B cell (primary cell): ENCODE measurements at regions of chr3 and their contacts with region 1.

Region 1: DNA sequence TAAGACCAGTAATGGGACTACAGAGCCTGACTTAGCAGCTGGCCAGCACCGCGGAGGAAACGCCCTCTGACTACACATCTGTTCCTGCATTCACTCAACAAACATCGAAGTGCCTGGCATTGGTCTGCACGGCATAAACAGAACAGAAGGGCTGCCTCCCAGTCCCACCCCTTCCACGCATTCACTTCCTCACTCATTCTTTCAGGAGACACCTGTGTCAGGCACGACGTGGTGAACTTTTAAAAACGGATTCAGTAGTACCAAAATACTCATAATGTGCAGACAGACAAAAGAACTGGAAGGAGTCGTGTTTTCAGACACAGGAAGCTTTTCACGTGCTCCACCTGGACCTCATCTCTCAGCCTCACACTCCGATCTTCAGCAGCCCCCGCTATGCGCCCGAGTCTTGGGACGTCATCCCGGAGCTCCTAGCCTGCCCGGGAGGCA is 123.3 kb downstream of the XXYLT1 start:
- DNase-seq: peak; percentile 77
- ATAC-seq: peak; percentile 73
- H3K4me3 ChIP-seq: peak overlapping the region; percentile 38 to 56 (median 44)
- H3K4me3 Mint-ChIP-seq: peak overlapping the region; percentile 90
- H3K27ac ChIP-seq: peak overlapping the region; percentile 45
- H3K27ac Mint-ChIP-seq: peak overlapping the region; percentile 89
- H3K4me1 ChIP-seq: peaks cover 51 to 77% of the 10 kb centered on the region in 2 donors
- H3K4me1 Mint-ChIP-seq: peaks cover 71% of the 10 kb centered on the region
- H3K27me3 ChIP-seq: no peaks in the 10 kb centered on the region
- H3K27me3 Mint-ChIP-seq: no peaks in the 10 kb centered on the region
- CTCF ChIP-seq: no peak

Region 2: DNA sequence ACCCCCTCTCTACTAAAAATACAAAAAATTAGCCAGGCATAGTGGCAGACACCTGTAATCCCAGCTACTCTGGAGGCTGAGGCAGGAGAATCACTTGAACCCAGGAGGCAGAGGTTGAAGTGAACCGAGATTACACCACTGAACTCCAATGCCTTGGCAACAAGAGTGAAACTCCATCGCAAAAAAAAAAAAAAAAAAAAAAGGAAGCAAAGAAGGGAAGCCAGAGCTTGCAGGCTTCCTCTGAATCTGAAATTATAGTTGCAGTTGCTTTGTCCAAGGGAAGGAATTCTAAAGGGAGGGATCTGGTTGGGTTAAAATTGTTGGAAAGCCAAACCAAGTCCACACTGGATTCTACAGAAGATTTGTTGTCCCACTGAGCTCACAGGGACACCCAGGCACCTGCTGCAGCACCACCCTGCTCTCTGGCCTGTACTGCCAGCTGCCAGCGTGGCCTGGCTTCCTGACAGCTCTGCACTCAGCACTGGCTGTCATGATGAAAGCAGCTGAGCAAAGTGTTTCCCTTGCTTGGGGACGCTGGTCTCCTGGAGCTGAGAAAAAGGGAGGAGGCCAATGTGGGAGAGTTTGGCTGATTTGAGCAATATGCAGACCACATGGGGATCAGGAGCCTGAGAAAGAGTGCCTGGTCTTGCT is 1100.6 kb before region 1 on chr3:
- CTCF ChIA-PET with region 1: no interaction called
- POLR2A ChIA-PET with region 1: no interaction called
- intact Hi-C with region 1: no loop called
- DNase-seq: peak; percentile 51
- ATAC-seq: peak; percentile 72
- H3K4me3 ChIP-seq: no peak overlapping the region
- H3K4me3 Mint-ChIP-seq: no peak overlapping the region
- H3K27ac ChIP-seq: peak overlapping the region in 1 of 2 donors; percentile 8
- H3K27ac Mint-ChIP-seq: peak overlapping the region; percentile 69
- H3K4me1 ChIP-seq: peaks cover 20 to 30% of the 10 kb centered on the region in 2 donors
- H3K4me1 Mint-ChIP-seq: peaks cover 29% of the 10 kb centered on the region
- H3K27me3 ChIP-seq: no peaks in the 10 kb centered on the region
- H3K27me3 Mint-ChIP-seq: no peaks in the 10 kb centered on the region
- CTCF ChIP-seq: no peak

Region 3: DNA sequence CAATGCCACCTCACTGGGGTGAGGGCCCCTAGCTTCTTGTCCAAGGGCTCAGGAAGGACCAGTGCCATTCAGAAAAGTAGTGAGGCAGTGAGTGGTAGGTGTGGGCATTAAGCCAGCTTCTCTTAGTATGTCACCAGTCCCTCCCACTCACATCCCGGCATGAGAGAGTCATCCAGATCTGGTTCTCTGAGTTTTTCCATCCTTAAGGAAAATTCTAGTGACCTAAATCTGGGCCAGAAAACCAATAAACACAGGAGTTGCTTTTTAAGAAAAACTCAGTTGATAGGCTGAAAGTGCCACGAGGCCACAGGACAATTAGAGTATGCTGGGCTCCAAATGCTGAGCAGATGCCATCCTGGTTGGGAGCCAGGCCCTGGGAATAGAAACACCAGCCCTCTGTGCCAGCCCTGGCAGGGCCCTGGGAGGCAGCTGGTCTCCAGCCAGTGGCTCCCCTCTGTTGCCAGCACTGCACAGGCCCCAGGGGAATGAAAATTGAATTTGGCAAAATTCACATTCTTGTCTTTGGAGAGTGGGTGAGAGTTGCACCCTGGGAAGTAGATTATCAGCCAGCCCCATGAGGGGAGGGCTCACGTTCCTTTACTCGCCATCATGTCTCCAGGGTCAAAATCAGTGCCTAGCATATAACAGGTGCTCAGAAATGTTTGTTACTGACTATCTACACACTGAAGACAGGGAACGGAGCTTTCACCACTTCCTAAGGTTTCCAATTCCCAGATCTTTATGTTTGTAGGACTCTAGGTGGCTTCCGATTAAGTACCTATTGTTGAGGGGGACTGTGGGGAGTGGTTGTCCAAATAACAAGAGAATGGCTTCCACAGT is 409.2 kb before region 1 on chr3:
- CTCF ChIA-PET with region 1: no interaction called
- POLR2A ChIA-PET with region 1: no interaction called
- intact Hi-C with region 1: loop called (anchors 5 kb)
- DNase-seq: no peak
- ATAC-seq: no peak
- H3K4me3 ChIP-seq: no peak overlapping the region
- H3K4me3 Mint-ChIP-seq: no peak overlapping the region
- H3K27ac ChIP-seq: no peak overlapping the region
- H3K27ac Mint-ChIP-seq: peak overlapping the region; percentile 27
- H3K4me1 ChIP-seq: peaks cover 25 to 35% of the 10 kb centered on the region in 2 donors
- H3K4me1 Mint-ChIP-seq: peaks cover 28% of the 10 kb centered on the region
- H3K27me3 ChIP-seq: no peaks in the 10 kb centered on the region
- H3K27me3 Mint-ChIP-seq: no peaks in the 10 kb centered on the region
- CTCF ChIP-seq: no peak

Region 4: DNA sequence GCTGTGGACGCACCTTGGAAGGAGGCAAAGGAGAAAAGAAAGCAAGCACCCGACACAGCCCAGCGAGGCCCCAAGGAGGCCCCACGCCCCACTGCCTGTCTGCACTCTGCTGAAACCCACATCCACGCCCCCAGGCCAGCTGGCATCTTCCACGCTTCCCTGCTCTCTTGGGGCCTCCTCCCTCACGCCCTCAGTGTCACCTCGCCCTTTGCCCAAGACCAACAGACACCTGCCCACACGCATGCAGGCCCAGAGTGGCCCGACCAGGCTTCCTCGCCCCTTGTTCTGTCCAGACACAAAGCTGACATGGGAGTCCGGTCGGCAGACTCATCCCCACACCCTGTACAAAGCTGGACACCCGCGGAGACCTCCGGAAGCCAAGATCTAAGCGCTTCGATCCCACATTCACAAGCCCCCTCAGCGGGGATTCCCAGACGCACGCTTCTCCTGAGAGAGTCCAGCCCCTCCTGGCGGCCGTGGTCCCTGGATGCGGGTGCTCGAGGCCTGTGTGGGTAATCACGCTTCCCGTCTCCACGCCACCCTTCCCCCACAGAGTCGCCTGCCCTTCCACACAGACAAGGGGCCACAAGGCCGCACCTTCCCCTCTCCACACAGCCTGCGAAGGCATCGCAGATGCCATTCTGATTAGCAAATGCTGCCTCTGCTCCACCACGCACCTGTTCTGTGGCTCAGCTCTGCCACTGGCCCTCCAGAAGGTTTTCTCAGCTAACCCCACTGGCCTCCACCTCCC is 53.3 kb before region 1 on chr3:
- CTCF ChIA-PET with region 1: no interaction called
- POLR2A ChIA-PET with region 1: no interaction called
- intact Hi-C with region 1: loop called (anchors 2 kb)
- DNase-seq: peak; percentile 87
- ATAC-seq: peak; percentile 85
- H3K4me3 ChIP-seq: peak overlapping the region in 4 of 5 experiments; percentile 36 to 63 (median 52)
- H3K4me3 Mint-ChIP-seq: peak overlapping the region; percentile 81
- H3K27ac ChIP-seq: peak overlapping the region; percentile 89 to 95
- H3K27ac Mint-ChIP-seq: peak overlapping the region; percentile 93
- H3K4me1 ChIP-seq: peaks cover 44 to 49% of the 10 kb centered on the region in 2 donors
- H3K4me1 Mint-ChIP-seq: peaks cover 54% of the 10 kb centered on the region
- H3K27me3 ChIP-seq: no peaks in the 10 kb centered on the region
- H3K27me3 Mint-ChIP-seq: no peaks in the 10 kb centered on the region
- CTCF ChIP-seq: no peak

Region 5: GRCh38 chr3:195133462-195133861 is 14.2 kb before region 1 on chr3:
- CTCF ChIA-PET with region 1: interaction called, 9 read pairs
- POLR2A ChIA-PET with region 1: interaction called, 12 read pairs
- intact Hi-C with region 1: loop called (anchors 1 kb)
- DNase-seq: peak; percentile 66
- ATAC-seq: no peak
- H3K4me3 ChIP-seq: no peak overlapping the region
- H3K4me3 Mint-ChIP-seq: peak overlapping the region; percentile 37
- H3K27ac ChIP-seq: no peak overlapping the region
- H3K27ac Mint-ChIP-seq: peak overlapping the region; percentile 60
- H3K4me1 ChIP-seq: peaks cover 16 to 22% of the 10 kb centered on the region in 2 donors
- H3K4me1 Mint-ChIP-seq: peaks cover 37% of the 10 kb centered on the region
- H3K27me3 ChIP-seq: no peaks in the 10 kb centered on the region
- H3K27me3 Mint-ChIP-seq: no peaks in the 10 kb centered on the region
- CTCF ChIP-seq: no peak

Region 6: GRCh38 chr3:195162033-195162669 is 14.5 kb after region 1 on chr3:
- CTCF ChIA-PET with region 1: interaction called, 12 read pairs
- POLR2A ChIA-PET with region 1: interaction called, 8 read pairs
- intact Hi-C with region 1: loop called (anchors 1 kb)
- DNase-seq: no peak
- ATAC-seq: peak; percentile 14
- H3K4me3 ChIP-seq: no peak overlapping the region
- H3K4me3 Mint-ChIP-seq: peak overlapping the region; percentile 61
- H3K27ac ChIP-seq: peak overlapping the region; percentile 14 to 21
- H3K27ac Mint-ChIP-seq: peak overlapping the region; percentile 86
- H3K4me1 ChIP-seq: peaks cover 43 to 64% of the 10 kb centered on the region in 2 donors
- H3K4me1 Mint-ChIP-seq: peaks cover 61% of the 10 kb centered on the region
- H3K27me3 ChIP-seq: no peaks in the 10 kb centered on the region
- H3K27me3 Mint-ChIP-seq: no peaks in the 10 kb centered on the region
- CTCF ChIP-seq: no peak

Region 7: GRCh38 chr3:195204360-195205163 is 56.9 kb after region 1 on chr3:
- CTCF ChIA-PET with region 1: no interaction called
- POLR2A ChIA-PET with region 1: interaction called, 5 read pairs
- intact Hi-C with region 1: loop called (anchors 5 kb)
- DNase-seq: peak; percentile 24
- ATAC-seq: no peak
- H3K4me3 ChIP-seq: no peak overlapping the region
- H3K4me3 Mint-ChIP-seq: peak overlapping the region; percentile 48
- H3K27ac ChIP-seq: no peak overlapping the region
- H3K27ac Mint-ChIP-seq: peak overlapping the region; percentile 47
- H3K4me1 ChIP-seq: peaks cover 14 to 30% of the 10 kb centered on the region in 2 donors
- H3K4me1 Mint-ChIP-seq: peaks cover 27% of the 10 kb centered on the region
- H3K27me3 ChIP-seq: no peaks in the 10 kb centered on the region
- H3K27me3 Mint-ChIP-seq: no peaks in the 10 kb centered on the region
- CTCF ChIP-seq: no peak

Region 8: DNA sequence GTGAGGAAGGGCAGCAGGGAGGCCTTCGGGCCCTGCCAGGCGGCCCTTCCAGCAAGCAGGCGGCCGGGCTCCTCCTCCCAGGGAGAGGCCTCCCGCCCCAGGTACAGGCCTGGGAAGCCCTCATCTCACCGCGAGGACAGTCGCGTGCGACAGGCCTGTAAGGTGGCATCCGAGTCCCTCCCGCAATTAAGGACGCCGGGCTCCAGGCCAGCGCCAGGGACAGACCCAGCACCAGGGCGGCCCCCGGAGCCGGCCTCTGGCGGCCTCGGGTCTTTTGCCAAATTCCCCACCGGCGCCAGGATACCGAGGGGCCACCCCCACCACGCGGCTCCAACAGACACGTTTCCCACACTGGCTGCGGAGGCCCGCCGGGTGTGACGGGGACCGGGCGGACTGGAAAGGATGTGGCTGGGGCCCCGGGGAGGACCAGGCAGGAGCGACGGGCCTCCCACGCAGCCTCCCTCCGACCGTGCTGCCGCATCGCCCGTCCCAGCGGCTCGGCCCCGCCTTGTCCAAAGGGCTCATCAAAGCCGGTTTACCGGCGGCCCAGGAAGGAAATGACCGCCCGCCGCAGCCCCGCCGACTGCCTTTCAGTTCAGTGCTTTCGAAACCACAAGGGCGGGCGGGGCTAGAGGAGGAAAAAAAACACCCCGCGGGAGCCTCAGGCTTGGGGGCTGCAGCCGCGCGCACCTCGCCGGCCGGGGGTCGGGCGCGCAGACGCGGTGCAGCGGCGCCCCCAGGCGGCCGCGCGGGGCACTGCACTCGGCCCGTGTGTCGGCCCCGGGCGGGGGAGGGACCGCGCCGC is 112.0 kb after region 1 on chr3:
- CTCF ChIA-PET with region 1: interaction called, 9 read pairs
- POLR2A ChIA-PET with region 1: no interaction called
- intact Hi-C with region 1: loop called (anchors 5 kb)
- DNase-seq: peak; percentile 95
- ATAC-seq: peak; percentile 90
- H3K4me3 ChIP-seq: peak overlapping the region in 4 of 5 experiments; percentile 63 to 89 (median 72)
- H3K4me3 Mint-ChIP-seq: peak overlapping the region; percentile 74
- H3K27ac ChIP-seq: peak overlapping the region; percentile 78 to 87
- H3K27ac Mint-ChIP-seq: peak overlapping the region; percentile 92
- H3K4me1 ChIP-seq: peaks cover 16 to 23% of the 10 kb centered on the region in 2 donors
- H3K4me1 Mint-ChIP-seq: peaks cover 19% of the 10 kb centered on the region
- H3K27me3 ChIP-seq: no peaks in the 10 kb centered on the region
- H3K27me3 Mint-ChIP-seq: no peaks in the 10 kb centered on the region
- CTCF ChIP-seq: peak; percentile 73